ENCODE measurements at regions of chr9 and their contacts with region 1.

Region 1: DNA sequence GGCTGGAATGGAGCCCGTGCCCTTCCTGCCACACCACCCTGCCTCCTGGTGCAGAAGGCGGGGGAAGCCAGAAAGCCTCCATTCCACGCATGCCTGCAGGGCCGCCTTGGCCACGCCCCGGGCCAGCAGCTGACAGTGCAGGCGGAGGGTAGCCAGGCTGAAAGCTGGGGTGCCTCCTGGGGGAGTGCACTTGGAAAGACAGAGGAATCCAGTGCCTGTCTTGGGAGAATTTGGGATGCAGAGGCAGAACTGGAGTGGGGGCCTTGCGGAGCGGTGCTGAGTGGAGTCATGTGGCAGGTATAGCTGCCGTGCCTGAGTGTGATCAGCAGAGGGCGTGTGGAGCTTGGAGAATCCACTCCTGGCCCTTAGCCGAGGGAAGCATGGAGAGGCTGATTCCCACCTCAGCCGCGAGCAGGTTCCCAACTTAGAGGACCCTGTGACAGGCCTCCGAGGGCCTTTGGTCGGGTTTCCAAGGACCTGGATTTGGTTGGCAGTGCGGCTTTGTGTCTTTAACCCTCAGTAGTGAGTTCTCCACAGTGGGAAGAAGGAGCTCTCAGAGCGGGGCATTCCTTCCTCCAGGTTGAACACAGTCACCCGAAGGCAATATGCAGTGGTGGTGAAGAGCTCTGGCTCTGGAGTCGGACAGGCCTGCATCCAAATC is 9.1 kb upstream of the URM1 start:
- DNase-seq: peak; percentile 59 to 74 (median 69)
- H3K4me3 ChIP-seq: peak overlapping the region; percentile 22 to 82 (median 57)
- H3K4me3 Mint-ChIP-seq: peak overlapping the region; percentile 89 to 97
- H3K27ac ChIP-seq: peak overlapping the region in 1 of 2 donors; percentile 17
- H3K27ac Mint-ChIP-seq: peak overlapping the region in 2 of 7 donors; percentile 11 to 58
- H3K4me1 ChIP-seq: peaks cover 21 to 25% of the 10 kb centered on the region in 2 donors
- H3K4me1 Mint-ChIP-seq: peaks cover 21% of the 10 kb centered on the region
- H3K27me3 ChIP-seq: no peaks in the 10 kb centered on the region
- H3K27me3 Mint-ChIP-seq: peaks cover 0 to 9% (median 5%) of the 10 kb centered on the region in 3 donors
- CTCF ChIP-seq: peak; percentile 96

Region 2: DNA sequence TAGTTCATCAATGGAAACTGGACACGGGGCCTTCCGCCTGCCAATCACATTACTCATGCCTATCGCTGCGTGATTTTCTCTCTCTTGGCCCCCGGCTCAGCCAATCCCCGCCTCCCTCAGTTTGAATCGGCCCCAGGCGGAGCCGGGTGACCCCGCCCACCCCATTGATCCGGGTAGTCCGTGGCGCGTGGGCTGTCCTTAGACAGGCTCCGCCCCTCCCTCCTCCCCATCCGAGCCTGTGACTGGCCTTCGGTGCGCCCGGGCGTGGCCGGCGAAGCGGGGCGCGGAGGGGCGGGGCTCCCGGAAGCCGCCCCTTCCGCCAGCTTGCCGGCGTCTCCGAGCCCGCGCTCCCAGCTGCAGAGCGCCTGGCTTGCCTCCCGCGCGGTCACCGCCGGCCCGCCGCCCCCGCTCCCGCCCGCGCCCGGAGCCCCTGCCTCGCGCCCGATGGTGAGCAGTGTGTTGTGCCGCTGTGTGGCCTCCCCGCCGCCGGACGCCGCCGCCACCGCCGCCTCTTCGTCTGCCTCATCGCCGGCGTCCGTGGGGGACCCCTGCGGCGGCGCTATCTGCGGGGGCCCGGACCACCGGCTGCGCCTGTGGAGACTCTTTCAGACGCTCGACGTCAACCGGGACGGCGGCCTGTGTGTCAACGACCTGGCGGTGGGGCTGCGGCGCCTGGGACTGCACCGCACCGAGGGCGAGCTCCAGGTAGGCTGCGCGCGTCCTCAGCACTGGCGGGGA is 294.1 kb before region 1 on chr9 and contains the start of gene SLC25A25:
- intact Hi-C with region 1: no loop called
- DNase-seq: peak; percentile 99
- H3K4me3 ChIP-seq: peak within 1 kb of the TSS; percentile 86 to 93 (median 91)
- H3K4me3 Mint-ChIP-seq: peak within 1 kb of the TSS in 1 of 2 donors; percentile 99
- H3K27ac ChIP-seq: peak within 1 kb of the TSS; percentile 74 to 88
- H3K27ac Mint-ChIP-seq: peak within 1 kb of the TSS; percentile 29 to 94 (median 85)
- H3K4me1 ChIP-seq: peaks cover 79 to 87% of the 10 kb centered on the region in 2 donors
- H3K4me1 Mint-ChIP-seq: peaks cover 73% of the 10 kb centered on the region
- H3K27me3 ChIP-seq: no peaks in the 10 kb centered on the region
- H3K27me3 Mint-ChIP-seq: peaks cover 0 to 5% (median 0%) of the 10 kb centered on the region in 3 donors
- CTCF ChIP-seq: no peak
- polyA plus RNA-seq, gene SLC25A25: 5.1 to 43.3 (median 6.3) TPM

Region 3: DNA sequence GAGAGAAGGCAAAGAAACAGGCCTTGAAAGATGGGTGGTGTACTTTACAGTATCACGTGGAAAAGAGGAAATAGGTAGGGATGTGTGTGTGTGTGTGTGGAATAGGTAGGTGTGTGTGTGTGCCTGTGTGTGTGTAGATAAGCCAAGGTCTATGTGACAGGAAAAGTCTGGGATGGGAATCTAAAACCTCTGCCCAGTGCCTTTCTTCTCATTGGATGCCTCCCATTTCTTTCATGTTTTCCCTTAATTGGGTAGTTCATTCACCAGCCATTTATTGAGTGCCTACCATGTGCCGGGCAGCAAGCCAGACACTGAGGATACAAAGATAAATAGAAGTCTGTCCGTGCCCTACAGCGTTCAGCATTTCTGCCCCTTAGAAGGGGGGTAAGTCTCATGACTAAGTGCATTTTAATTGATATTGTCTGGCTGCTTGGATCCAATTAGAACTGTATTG is 10.1 kb after region 1 on chr9:
- intact Hi-C with region 1: no loop called
- DNase-seq: no peak
- H3K4me3 ChIP-seq: peak overlapping the region in 2 of 3 experiments; percentile 93 to 94
- H3K4me3 Mint-ChIP-seq: peak overlapping the region; percentile 89 to 96
- H3K27ac ChIP-seq: peak overlapping the region in 1 of 2 donors; percentile 99
- H3K27ac Mint-ChIP-seq: peak overlapping the region; percentile 95 to 99 (median 98)
- H3K4me1 ChIP-seq: peaks cover 20 to 22% of the 10 kb centered on the region in 2 donors
- H3K4me1 Mint-ChIP-seq: peaks cover 30% of the 10 kb centered on the region
- H3K27me3 ChIP-seq: no peaks in the 10 kb centered on the region
- H3K27me3 Mint-ChIP-seq: peaks cover 0 to 3% (median 0%) of the 10 kb centered on the region in 3 donors
- CTCF ChIP-seq: no peak

Region 4: GRCh38 chr9:128405077-128405779 is 43.1 kb after region 1 on chr9:
- intact Hi-C with region 1: no loop called
- DNase-seq: no peak
- H3K4me3 ChIP-seq: no peak overlapping the region
- H3K4me3 Mint-ChIP-seq: no peak overlapping the region
- H3K27ac ChIP-seq: no peak overlapping the region
- H3K27ac Mint-ChIP-seq: no peak overlapping the region
- H3K4me1 ChIP-seq: no peaks in the 10 kb centered on the region
- H3K4me1 Mint-ChIP-seq: no peaks in the 10 kb centered on the region
- H3K27me3 ChIP-seq: peaks cover 5 to 23% of the 10 kb centered on the region in 2 donors
- H3K27me3 Mint-ChIP-seq: peaks cover 18 to 34% (median 25%) of the 10 kb centered on the region in 3 donors
- CTCF ChIP-seq: no peak

Region 5: DNA sequence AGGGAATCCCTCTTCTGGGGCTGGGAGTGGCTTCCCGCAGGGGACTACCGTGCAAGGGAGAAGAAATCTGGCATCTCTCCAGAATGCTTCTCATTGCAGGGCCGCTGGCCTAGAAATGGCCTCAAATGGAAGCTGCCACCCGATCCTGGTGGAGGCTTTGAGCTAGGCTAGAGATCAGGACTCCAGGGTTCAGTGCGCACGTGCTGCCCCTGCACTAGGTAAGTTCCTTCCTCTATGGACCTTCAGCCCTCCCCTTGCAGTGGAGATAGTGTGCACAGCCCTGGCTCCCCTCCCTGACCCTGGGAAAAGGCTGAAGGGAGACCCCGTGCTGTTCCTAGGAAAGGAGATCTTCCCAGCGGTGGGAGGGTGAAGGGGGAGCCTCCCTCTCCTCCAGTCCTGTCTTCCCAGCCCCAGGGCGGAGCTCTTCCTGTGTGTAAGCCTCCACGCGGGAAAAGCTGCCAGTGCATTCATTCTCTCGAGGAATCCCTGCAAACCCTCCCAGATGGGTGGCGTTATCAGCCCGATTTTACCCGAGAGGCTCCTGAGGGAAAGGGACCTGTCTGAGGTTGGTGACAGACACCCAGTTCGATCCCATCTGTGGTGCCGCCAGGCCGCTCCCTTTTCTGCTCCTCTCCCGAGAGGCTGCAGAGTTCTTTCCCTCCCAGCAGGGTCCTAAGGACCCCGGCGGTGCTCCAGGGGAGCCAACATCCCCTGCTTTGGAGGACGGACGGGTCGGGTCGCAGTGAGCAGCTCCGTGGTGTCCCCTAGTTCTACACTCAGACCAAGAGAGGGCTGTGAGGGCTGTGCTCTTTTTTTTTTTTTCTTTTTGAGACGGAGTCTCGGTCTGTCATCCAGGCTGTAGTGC is 57.2 kb after region 1 on chr9:
- intact Hi-C with region 1: loop called in 1 of 2 experiments (anchors 5 kb)
- DNase-seq: no peak
- H3K4me3 ChIP-seq: peak overlapping the region in 1 of 3 experiments; percentile 92
- H3K4me3 Mint-ChIP-seq: peak overlapping the region; percentile 72 to 83
- H3K27ac ChIP-seq: no peak overlapping the region
- H3K27ac Mint-ChIP-seq: no peak overlapping the region
- H3K4me1 ChIP-seq: peaks cover 19 to 30% of the 10 kb centered on the region in 2 donors
- H3K4me1 Mint-ChIP-seq: peaks cover 29% of the 10 kb centered on the region
- H3K27me3 ChIP-seq: peaks cover 10 to 27% of the 10 kb centered on the region in 2 donors
- H3K27me3 Mint-ChIP-seq: peaks cover 27 to 60% (median 30%) of the 10 kb centered on the region in 3 donors
- CTCF ChIP-seq: no peak